ENCODE measurements at regions of chr11 and their contacts with region 1.

Region 1: DNA sequence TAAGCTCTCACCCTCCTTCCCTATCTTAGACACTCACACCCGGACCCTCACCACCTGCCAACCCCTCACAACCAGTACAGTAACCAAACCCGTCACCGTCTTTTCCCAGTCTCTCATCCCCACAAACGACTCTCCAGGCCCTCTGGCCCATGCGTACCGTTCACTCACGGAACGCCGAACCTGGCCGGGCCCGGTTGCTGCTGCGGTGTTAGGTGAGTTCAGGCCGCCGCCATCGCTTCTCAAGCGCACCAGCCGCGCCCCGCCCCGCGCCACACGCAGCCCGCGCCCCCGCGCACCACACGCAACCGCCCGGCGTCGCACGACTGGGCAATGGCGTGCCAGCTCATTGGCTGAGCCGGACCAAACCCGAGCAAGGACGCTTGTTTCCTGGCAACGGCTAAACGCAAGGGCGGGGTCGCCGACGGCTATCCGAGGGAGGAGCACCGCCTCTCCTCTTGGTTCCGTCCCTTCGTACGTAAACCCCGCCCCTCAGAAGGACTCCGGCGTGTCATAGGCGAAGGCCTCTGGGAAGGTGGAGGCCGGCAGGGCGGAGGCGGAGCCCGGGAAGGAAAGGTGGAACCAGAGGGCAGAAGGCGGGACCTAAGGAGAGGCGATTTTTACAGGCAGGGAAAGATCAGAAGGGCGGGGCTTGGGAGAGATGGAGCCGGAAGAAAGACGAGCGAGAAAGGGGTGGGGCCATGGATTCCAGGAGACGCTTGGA is at the start of gene FHIP1B:
- DNase-seq: peak; percentile 95 to 100 (median 100)
- ATAC-seq: peak; percentile 95
- H3K4me3 ChIP-seq: peak within 1 kb of the TSS; percentile 96
- H3K4me3 Mint-ChIP-seq: peak within 1 kb of the TSS; percentile 90 to 100 (median 98)
- H3K27ac ChIP-seq: peak within 1 kb of the TSS; percentile 81
- H3K27ac Mint-ChIP-seq: peak within 1 kb of the TSS; percentile 87 to 100 (median 97)
- H3K4me1 ChIP-seq: peaks cover 14 to 19% of the 10 kb centered on the region in 2 donors
- H3K4me1 Mint-ChIP-seq: peaks cover 36 to 55% (median 50%) of the 10 kb centered on the region in 7 donors
- H3K27me3 ChIP-seq: no peaks in the 10 kb centered on the region
- H3K27me3 Mint-ChIP-seq: no peaks in the 10 kb centered on the region
- total RNA-seq, gene FHIP1B: 26.8 to 52.4 (median 44.3) TPM

Region 2: GRCh38 chr11:5624489-5625279 is 609.9 kb before region 1 on chr11 and contains the start of gene TRIM34:
- CTCF ChIA-PET with region 1: no interaction called
- POLR2A ChIA-PET with region 1: no interaction called
- intact Hi-C with region 1: loop called (anchors 1 to 2 kb)
- DNase-seq: peak; percentile 15 to 79 (median 74)
- ATAC-seq: peak; percentile 98
- H3K4me3 ChIP-seq: peak within 1 kb of the TSS; percentile 73
- H3K4me3 Mint-ChIP-seq: peak within 1 kb of the TSS; percentile 81 to 96 (median 91)
- H3K27ac ChIP-seq: peak within 1 kb of the TSS; percentile 84
- H3K27ac Mint-ChIP-seq: peak within 1 kb of the TSS; percentile 90 to 96 (median 95)
- H3K4me1 ChIP-seq: peaks cover 17 to 18% of the 10 kb centered on the region in 2 donors
- H3K4me1 Mint-ChIP-seq: peaks cover 33 to 55% (median 51%) of the 10 kb centered on the region in 7 donors
- H3K27me3 ChIP-seq: no peaks in the 10 kb centered on the region
- H3K27me3 Mint-ChIP-seq: no peaks in the 10 kb centered on the region
- total RNA-seq, gene TRIM34: 5.8 to 14.2 (median 10.8) TPM

Region 3: GRCh38 chr11:6315811-6316425 is 81.4 kb after region 1 on chr11:
- CTCF ChIA-PET with region 1: no interaction called
- POLR2A ChIA-PET with region 1: no interaction called
- intact Hi-C with region 1: loop called in 1 of 2 experiments (anchors 2 kb)
- DNase-seq: peak in 5 of 9 donors; percentile 7 to 38 (median 10)
- ATAC-seq: peak; percentile 77
- H3K4me3 ChIP-seq: no peak overlapping the region
- H3K4me3 Mint-ChIP-seq: no peak overlapping the region
- H3K27ac ChIP-seq: no peak overlapping the region
- H3K27ac Mint-ChIP-seq: no peak overlapping the region
- H3K4me1 ChIP-seq: no peaks in the 10 kb centered on the region
- H3K4me1 Mint-ChIP-seq: peaks cover 0 to 22% (median 10%) of the 10 kb centered on the region in 7 donors
- H3K27me3 ChIP-seq: peaks cover 2 to 4% of the 10 kb centered on the region in 2 donors
- H3K27me3 Mint-ChIP-seq: peaks cover 40 to 57% (median 54%) of the 10 kb centered on the region in 5 donors

Region 4: GRCh38 chr11:6520265-6520664 is 285.7 kb after region 1 on chr11:
- CTCF ChIA-PET with region 1: no interaction called
- POLR2A ChIA-PET with region 1: no interaction called
- intact Hi-C with region 1: no loop called
- DNase-seq: no peak
- ATAC-seq: no peak
- H3K4me3 ChIP-seq: no peak overlapping the region
- H3K4me3 Mint-ChIP-seq: no peak overlapping the region
- H3K27ac ChIP-seq: no peak overlapping the region
- H3K27ac Mint-ChIP-seq: no peak overlapping the region
- H3K4me1 ChIP-seq: no peaks in the 10 kb centered on the region
- H3K4me1 Mint-ChIP-seq: peaks cover 0 to 18% (median 11%) of the 10 kb centered on the region in 7 donors
- H3K27me3 ChIP-seq: no peaks in the 10 kb centered on the region
- H3K27me3 Mint-ChIP-seq: no peaks in the 10 kb centered on the region

Region 5: DNA sequence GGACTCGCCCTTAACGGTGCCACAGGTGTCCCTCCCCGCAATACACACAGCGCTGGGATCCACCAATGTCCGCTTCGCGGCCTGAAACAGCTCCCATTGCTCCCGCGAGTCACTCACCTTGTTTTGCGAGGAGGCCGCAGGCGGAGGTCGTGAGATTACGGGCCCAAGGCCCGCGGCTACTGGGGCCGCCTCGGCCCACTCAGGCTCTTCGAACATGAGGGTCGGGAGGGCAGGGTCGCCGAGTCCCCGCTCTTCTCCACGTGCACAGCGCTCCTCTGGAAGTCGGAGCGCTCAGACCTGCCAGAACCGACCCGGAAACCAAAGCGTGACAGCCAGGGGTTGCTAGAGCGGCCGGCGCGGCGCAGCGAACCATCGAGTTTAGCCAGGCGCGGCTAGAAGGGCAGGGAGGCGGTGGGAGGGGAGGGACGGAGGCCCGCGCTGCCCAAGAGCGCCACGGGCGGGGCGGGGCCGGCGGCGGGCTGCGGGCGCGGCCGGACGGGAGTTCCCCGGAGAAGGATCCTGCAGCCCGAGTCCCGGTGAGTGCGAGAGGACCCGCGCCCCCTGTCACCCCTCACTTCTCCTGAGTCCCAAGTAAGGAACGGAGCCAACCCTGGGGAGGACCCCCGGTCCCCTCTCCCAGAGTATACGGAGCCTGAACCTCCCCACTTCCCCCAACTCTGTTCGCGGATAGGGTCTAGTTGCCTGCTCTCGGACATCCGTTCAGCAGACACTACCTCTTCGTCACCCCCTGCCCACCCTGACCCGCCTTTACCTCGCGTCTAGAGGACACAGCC is 368.9 kb after region 1 on chr11 and contains the starts of genes ILK and RRP8:
- CTCF ChIA-PET with region 1: no interaction called
- POLR2A ChIA-PET with region 1: no interaction called
- intact Hi-C with region 1: loop called in 1 of 2 experiments (anchors 2 kb)
- DNase-seq: peak; percentile 69 to 86 (median 78)
- ATAC-seq: peak; percentile 92
- H3K4me3 ChIP-seq: peak within 1 kb of the TSS; percentile 85
- H3K4me3 Mint-ChIP-seq: no peak within 1 kb of the TSS
- H3K27ac ChIP-seq: peak within 1 kb of the TSS; percentile 86
- H3K27ac Mint-ChIP-seq: no peak within 1 kb of the TSS
- H3K4me1 ChIP-seq: peaks cover 51% of the 10 kb centered on the region in 2 donors
- H3K4me1 Mint-ChIP-seq: peaks cover 9 to 33% (median 21%) of the 10 kb centered on the region in 7 donors
- H3K27me3 ChIP-seq: no peaks in the 10 kb centered on the region
- H3K27me3 Mint-ChIP-seq: no peaks in the 10 kb centered on the region
- total RNA-seq, gene ILK: 34.4 to 165 (median 89.6) TPM
- total RNA-seq, gene RRP8: 21.4 to 37.9 (median 27.9) TPM

Region 6: GRCh38 chr11:6746086-6746618 is 511.6 kb after region 1 on chr11:
- CTCF ChIA-PET with region 1: no interaction called
- POLR2A ChIA-PET with region 1: no interaction called
- intact Hi-C with region 1: loop called (anchors 2 kb)
- DNase-seq: peak in 8 of 9 donors; percentile 32 to 66 (median 64)
- ATAC-seq: peak; percentile 89
- H3K4me3 ChIP-seq: peak overlapping the region; percentile 80
- H3K4me3 Mint-ChIP-seq: no peak overlapping the region
- H3K27ac ChIP-seq: peak overlapping the region; percentile 85
- H3K27ac Mint-ChIP-seq: no peak overlapping the region
- H3K4me1 ChIP-seq: peaks cover 18 to 37% of the 10 kb centered on the region in 2 donors
- H3K4me1 Mint-ChIP-seq: peaks cover 26 to 48% (median 29%) of the 10 kb centered on the region in 7 donors
- H3K27me3 ChIP-seq: no peaks in the 10 kb centered on the region
- H3K27me3 Mint-ChIP-seq: no peaks in the 10 kb centered on the region

Region 7: GRCh38 chr11:8018484-8019313 is 1784.2 kb after region 1 on chr11:
- CTCF ChIA-PET with region 1: no interaction called
- POLR2A ChIA-PET with region 1: no interaction called
- intact Hi-C with region 1: loop called in 1 of 2 experiments (anchors 5 kb)
- DNase-seq: peak; percentile 60 to 85 (median 74)
- ATAC-seq: peak; percentile 83
- H3K4me3 ChIP-seq: peak overlapping the region; percentile 62
- H3K4me3 Mint-ChIP-seq: peak overlapping the region; percentile 72 to 90 (median 82)
- H3K27ac ChIP-seq: peak overlapping the region; percentile 47
- H3K27ac Mint-ChIP-seq: peak overlapping the region in 7 of 9 donors; percentile 42 to 89 (median 78)
- H3K4me1 ChIP-seq: peaks cover 4% of the 10 kb centered on the region in 2 donors
- H3K4me1 Mint-ChIP-seq: peaks cover 7 to 20% (median 12%) of the 10 kb centered on the region in 7 donors
- H3K27me3 ChIP-seq: peaks cover 0 to 4% of the 10 kb centered on the region in 2 donors
- H3K27me3 Mint-ChIP-seq: peaks cover 40 to 57% (median 55%) of the 10 kb centered on the region in 5 donors

Measured in naive thymus-derived CD4-positive, alpha-beta T cell (primary cell).